ENCODE measurements at regions of chr11 and their contacts with region 1.

Region 1: DNA sequence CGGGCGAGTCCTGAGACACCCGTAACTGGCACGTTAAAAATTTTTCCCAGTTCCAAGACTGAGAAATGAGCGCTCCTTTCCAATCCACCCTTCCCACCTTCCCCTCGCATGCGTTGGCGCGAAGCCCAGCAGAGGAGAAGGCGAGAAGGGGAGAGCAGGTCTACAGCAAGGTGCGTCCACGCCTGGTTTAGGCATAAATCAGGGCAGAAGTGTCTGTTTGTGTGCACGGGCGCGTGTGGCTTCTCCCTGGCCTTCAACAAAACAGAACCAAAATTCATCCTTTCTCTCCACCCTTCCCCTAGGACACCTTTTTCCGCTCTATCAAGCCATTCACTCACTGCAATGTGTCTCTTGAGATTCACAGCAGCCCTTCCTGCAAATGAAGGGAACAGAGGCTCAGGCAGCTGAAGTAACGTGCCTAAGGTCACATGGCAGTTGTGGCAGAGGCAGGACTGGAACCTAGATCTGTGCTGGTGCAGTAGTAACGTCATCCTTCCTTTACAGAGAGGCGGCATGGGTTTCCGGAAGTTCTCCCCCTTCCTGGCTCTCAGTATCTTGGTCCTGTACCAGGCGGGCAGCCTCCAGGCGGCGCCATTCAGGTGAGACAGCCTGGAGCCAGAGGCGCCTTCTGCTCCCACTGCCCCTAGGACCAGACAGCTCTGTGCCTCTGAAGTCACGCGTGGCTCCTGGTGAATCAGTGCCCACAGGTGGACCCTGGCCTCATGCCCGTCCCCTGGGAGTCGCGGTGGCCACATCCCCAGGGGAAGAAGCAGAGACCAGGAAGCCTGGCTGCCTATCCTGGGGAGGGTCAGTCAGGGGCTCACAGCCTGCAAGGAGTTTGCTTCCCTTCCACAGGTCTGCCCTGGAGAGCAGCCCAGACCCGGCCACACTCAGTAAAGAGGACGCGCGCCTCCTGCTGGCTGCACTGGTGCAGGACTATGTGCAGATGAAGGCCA is 1.1 kb downstream of the CALCB start:
- DNase-seq: peak; percentile 67 to 88 (median 79)
- H3K4me3 ChIP-seq: peak overlapping the region; percentile 4 to 71 (median 50)
- H3K27ac ChIP-seq: no peak overlapping the region
- H3K27me3 ChIP-seq: peaks cover 0 to 34% (median 5%) of the 10 kb centered on the region in 45 donors
- CTCF ChIP-seq: peak; percentile 19 to 82 (median 70)

Region 2: GRCh38 chr11:14537134-14537599 is 537.3 kb before region 1 on chr11:
- intact Hi-C with region 1: loop called in 1 of 2 experiments (anchors 10 kb)
- DNase-seq: peak in 1 of 10 donors; percentile 44
- H3K4me3 ChIP-seq: peak overlapping the region in 4 of 59 donors; percentile 10 to 37 (median 29)
- H3K27ac ChIP-seq: peak overlapping the region in 3 of 59 donors; percentile 0 to 82 (median 28)
- H3K27me3 ChIP-seq: no peaks in the 10 kb centered on the region
- CTCF ChIP-seq: peak; percentile 58 to 83 (median 76)

Region 3: GRCh38 chr11:14907411-14908213 is 166.9 kb before region 1 on chr11:
- intact Hi-C with region 1: loop called in 1 of 2 experiments (anchors 5 kb)
- DNase-seq: peak; percentile 60 to 84 (median 80)
- H3K4me3 ChIP-seq: no peak overlapping the region
- H3K27ac ChIP-seq: no peak overlapping the region
- H3K27me3 ChIP-seq: peaks cover 0 to 5% (median 0%) of the 10 kb centered on the region in 45 donors
- CTCF ChIP-seq: peak; percentile 38 to 89 (median 80)

Region 4: GRCh38 chr11:15062599-15062998 is 11.9 kb before region 1 on chr11:
- intact Hi-C with region 1: loop called in 1 of 2 experiments (anchors 1 kb)
- DNase-seq: no peak
- H3K4me3 ChIP-seq: no peak overlapping the region
- H3K27ac ChIP-seq: no peak overlapping the region
- H3K27me3 ChIP-seq: peaks cover 0 to 29% (median 0%) of the 10 kb centered on the region in 45 donors
- CTCF ChIP-seq: no peak